ENCODE measurements at regions of chr6 and their contacts with region 1.

Region 1: DNA sequence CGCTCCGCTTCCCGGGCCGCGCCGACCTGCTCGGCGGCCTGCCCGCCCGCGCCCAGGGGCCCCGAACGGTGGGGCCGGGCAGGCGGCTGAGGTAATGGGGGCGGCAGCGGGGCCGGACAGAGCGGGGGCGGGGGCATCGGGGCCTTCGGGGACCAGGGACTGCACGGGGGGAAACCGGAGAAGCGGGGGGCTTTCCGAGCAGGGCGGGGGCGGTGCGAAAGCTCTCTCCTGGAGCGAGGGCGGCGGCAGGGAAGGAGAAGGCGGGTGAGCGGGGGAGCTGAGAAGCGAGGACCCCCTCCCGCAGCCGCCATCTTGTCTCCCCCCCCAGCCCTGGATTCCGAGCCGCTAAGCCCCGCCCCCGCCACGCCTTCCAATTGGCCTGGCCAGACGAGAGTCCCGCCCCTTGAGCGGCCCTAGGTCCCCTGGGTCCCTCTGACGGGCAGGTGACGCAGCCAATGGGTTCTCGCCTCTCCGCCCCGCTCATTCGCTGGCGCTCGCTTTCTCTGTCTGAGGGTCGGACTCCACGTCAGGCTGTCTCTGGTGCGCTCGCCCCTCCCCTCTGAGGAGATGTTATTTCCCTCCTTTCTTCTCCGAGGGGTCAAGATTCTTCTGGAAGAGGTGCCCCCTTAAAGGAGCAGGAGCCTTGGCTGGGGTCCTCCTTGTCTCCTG is 470 bp downstream of the BRPF3 start:
- DNase-seq: peak; percentile 89 to 97
- H3K4me3 ChIP-seq: peak overlapping the region; percentile 72
- H3K27ac ChIP-seq: peak overlapping the region; percentile 39; the same call in 1 of the 2 replicates
- H3K4me1 ChIP-seq: peaks cover 22% of the 10 kb centered on the region
- H3K27me3 ChIP-seq: no peaks in the 10 kb centered on the region
- CTCF ChIP-seq: no peak

Region 2: DNA sequence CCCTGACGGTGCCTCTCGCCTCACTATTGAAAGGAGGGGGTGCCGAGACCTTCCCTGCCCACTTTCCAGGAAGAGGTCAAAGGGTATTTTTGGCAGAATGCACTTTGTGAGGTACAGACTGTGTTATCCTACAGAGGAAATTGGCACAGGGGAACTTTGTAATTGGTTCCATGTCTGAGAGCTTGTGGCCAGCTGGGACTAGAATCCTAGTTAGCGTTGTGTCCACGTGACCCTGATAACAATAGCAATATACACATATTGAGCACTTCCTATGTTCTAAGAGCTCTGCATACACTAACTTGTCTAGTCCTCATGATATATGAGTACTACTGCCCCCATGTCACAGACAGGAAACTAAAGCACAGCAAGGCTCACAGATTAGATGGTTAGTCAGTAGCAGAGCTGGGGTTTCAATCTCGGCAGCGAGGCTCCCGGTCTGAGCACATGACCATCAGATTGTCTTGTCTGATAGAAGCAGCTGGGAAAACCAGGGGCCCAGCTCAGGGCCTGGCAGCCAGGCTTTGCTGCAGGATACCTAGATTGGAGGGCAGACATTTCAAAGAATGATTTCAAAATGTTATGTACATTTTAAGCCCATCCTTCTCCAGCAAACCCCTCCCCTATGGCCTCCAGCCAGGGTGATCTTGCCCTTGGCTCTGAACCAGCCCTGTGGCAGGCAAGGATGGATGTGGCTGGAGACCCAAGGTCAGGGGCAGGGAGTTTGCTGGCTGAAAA is 65.3 kb before region 1 on chr6:
- CTCF ChIA-PET with region 1: interaction called, 3 read pairs
- POLR2A ChIA-PET with region 1: no interaction called
- intact Hi-C with region 1: loop called (anchors 2 kb)
- DNase-seq: peak; percentile 57 to 69
- H3K4me3 ChIP-seq: peak overlapping the region; percentile 73
- H3K27ac ChIP-seq: peak overlapping the region; percentile 64
- H3K4me1 ChIP-seq: peaks cover 50% of the 10 kb centered on the region
- H3K27me3 ChIP-seq: no peaks in the 10 kb centered on the region
- CTCF ChIP-seq: no peak

Region 3: DNA sequence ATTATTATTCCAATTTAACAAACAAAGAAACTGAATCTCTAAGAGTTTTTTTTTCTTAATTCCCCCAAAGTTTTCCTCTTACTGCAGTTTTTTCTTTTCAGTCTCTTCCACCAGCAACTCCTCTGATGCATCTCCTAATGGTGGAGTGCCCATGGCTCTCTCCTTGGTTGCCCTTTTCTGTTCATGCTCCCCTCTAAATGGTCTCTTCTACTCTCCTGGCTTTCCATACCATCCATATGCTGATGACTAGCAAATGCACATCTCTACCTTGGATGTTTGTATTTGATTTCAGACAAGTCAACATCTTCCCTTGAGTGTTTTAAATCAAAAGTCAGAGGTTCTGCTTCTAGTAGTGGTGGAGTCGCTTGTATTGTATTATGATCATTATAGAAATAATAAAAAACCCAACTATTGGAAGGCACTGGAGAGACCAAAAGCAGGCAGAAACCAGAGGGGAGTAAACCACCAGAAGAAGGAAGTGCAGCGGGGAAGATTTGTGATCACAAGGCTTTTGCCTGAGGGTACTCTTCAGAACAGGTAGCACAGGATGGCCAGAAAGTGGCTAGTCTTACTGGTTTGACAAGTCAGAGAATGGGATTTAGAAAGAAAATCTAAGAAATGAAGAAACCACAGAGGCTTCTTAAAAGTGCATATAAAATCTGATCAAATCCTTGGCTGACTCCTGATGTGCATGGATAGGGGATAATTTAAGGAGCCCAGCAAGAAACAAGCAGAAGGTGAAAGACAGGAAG is 42.9 kb before region 1 on chr6:
- CTCF ChIA-PET with region 1: no interaction called
- POLR2A ChIA-PET with region 1: no interaction called
- intact Hi-C with region 1: loop called (anchors 1 kb)
- DNase-seq: peak; percentile 65 to 92
- H3K4me3 ChIP-seq: peak overlapping the region; percentile 10; the same call in 1 of the 2 replicates
- H3K27ac ChIP-seq: peak overlapping the region; percentile 62
- H3K4me1 ChIP-seq: peaks cover 38% of the 10 kb centered on the region
- H3K27me3 ChIP-seq: no peaks in the 10 kb centered on the region
- CTCF ChIP-seq: no peak

Region 4: GRCh38 chr6:36224904-36225461 is 28.0 kb after region 1 on chr6:
- CTCF ChIA-PET with region 1: no interaction called
- POLR2A ChIA-PET with region 1: no interaction called
- intact Hi-C with region 1: no loop called
- DNase-seq: peak; percentile 43 to 84
- H3K4me3 ChIP-seq: peak overlapping the region; percentile 15; the same call in 1 of the 2 replicates
- H3K27ac ChIP-seq: peak overlapping the region; percentile 52
- H3K4me1 ChIP-seq: peaks cover 57% of the 10 kb centered on the region
- H3K27me3 ChIP-seq: no peaks in the 10 kb centered on the region
- CTCF ChIP-seq: no peak

Region 5: GRCh38 chr6:36360241-36361054 is 163.4 kb after region 1 on chr6:
- CTCF ChIA-PET with region 1: no interaction called
- POLR2A ChIA-PET with region 1: no interaction called
- intact Hi-C with region 1: loop called (anchors 2 kb)
- DNase-seq: peak; percentile 43 to 70
- H3K4me3 ChIP-seq: no peak overlapping the region
- H3K27ac ChIP-seq: no peak overlapping the region
- H3K4me1 ChIP-seq: 0 out of 2 replicates have a peak, but pooled peaks cover 7% of the 10 kb centered on the region
- H3K27me3 ChIP-seq: no peaks in the 10 kb centered on the region
- CTCF ChIP-seq: peak; percentile 90